GM12878 (cell line): ENCODE measurements at regions of chr4 and their contacts with region 1.

Region 1: DNA sequence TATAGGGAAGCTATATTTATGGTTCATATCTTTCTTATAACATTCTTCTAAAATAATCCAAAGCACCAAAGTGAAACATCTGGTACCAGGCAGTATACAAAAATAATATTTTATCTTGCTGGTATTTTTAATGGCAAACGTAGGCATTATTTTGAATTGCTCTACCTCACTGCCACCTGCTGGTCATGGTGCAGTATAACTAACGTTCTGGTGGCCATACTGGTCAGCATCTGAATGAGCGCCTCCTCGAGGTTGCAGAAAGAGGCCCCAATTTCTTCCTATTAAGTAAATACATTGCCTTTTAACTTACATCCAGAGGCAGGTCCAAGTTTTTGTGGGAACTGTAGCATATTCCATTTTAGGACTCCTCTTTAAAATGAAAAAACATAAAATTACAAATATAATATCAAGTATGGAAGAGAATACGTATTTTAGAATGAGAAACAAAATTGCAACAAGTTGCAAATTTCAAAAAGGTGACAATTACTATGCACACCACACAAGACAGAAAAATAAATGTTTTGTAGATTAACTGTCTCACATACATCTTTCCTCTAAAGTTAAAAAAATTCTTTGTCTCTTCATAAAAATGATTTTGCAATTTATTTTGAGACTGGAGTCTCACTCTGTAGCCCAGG is 22.9 kb upstream of the CWH43 start:
- DNase-seq: peak; percentile 21
- ATAC-seq: peak; percentile 97
- H3K4me3 ChIP-seq: no peak overlapping the region
- H3K27ac ChIP-seq: no peak overlapping the region
- H3K4me1 ChIP-seq: no peaks in the 10 kb centered on the region
- H3K27me3 ChIP-seq: no peaks in the 10 kb centered on the region; a peak in 1 of 4 replicates
- CTCF ChIP-seq: peak; percentile 89 to 100 (median 99); a peak in 5 of 6 replicates
- EP300 ChIP-seq: no peak
- POLR2A ChIP-seq: no peak
- RAD21 ChIP-seq: peak; percentile 97

Region 2: DNA sequence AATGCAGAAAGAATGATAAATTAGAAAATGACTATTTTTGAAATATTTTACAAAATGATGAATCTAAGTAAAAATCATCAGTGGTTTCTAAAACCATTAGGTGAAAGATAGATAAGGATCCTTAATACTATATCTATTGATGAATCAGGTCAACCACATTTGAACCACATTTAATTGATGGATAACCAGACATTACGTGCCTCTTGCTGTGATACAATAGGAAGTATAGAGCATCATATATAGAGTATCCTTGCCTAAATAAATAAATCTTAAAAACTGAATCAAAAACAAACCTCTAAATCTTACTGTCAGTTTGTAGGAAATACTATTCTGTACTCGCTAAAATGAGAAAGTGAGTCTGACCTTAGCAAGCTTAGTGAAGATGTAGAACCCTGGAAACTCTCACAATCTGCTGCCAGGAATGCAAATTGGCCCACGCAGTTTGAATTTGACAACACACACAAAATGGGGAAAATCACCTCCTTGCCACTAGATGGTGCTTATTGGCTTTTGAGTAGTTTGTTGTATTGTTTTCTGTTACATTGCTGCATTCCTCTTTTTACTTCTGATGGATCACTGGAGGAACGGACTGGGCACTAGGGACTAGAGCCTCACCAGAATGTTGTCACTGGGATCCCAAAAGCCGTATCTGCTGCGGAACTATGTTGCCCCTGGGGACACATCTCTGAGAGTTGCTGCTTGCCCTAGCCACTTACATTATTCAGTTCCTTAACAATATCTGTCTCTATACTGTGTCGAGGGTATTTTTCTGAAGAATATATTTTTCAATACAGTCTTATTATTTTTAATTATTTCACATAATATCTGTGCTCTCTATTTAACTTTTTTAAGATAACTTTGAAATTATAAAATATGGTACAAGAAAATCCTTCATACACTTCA is 647.2 kb before region 1 on chr4:
- CTCF ChIA-PET with region 1: interaction called, 4 read pairs
- POLR2A ChIA-PET with region 1: no interaction called
- RAD21 ChIA-PET with region 1: no interaction called
- SMC1A ChIA-PET with region 1: no interaction called
- in situ Hi-C with region 1: no loop called
- intact Hi-C with region 1: loop called (anchors 5 kb)
- DNase-seq: no peak
- ATAC-seq: peak; percentile 89
- H3K4me3 ChIP-seq: no peak overlapping the region
- H3K27ac ChIP-seq: no peak overlapping the region
- H3K4me1 ChIP-seq: no peaks in the 10 kb centered on the region
- H3K27me3 ChIP-seq: no peaks in the 10 kb centered on the region
- CTCF ChIP-seq: peak; percentile 66 to 79 (median 70); a peak in 5 of 6 replicates
- EP300 ChIP-seq: no peak
- POLR2A ChIP-seq: no peak
- RAD21 ChIP-seq: peak; percentile 72

Region 3: GRCh38 chr4:48445704-48446103 is 517.5 kb before region 1 on chr4:
- CTCF ChIA-PET with region 1: interaction called, 5 read pairs
- POLR2A ChIA-PET with region 1: no interaction called
- RAD21 ChIA-PET with region 1: interaction called, 4 read pairs
- SMC1A ChIA-PET with region 1: interaction called, 3 read pairs
- in situ Hi-C with region 1: no loop called
- intact Hi-C with region 1: loop called (anchors 2 kb)
- DNase-seq: no peak
- ATAC-seq: peak; percentile 49; the same call in 1 of the 3 replicates
- H3K4me3 ChIP-seq: no peak overlapping the region
- H3K27ac ChIP-seq: no peak overlapping the region
- H3K4me1 ChIP-seq: no peaks in the 10 kb centered on the region
- H3K27me3 ChIP-seq: no peaks in the 10 kb centered on the region
- CTCF ChIP-seq: peak in 1 of 3 experiments; percentile 31; a peak in 2 of 6 replicates
- EP300 ChIP-seq: no peak
- POLR2A ChIP-seq: no peak
- RAD21 ChIP-seq: peak; percentile 53

Region 4: DNA sequence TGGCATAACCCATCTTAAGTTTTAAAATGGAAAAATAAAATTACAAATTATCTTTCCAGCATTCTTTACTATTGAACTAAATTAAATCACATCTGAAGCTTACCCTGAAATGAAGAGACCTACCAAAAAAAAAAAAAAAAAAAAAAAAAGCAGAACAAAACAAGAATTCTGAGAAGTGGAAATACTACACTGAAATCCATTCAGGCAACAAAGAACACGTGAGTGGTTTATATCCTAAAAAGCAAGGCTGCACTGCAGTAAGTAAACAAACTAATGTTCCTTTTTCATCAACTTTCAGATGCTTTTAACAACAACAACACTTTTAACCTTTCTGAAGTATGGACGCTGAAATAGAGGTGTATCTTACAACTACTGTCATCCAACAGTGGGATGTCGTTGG is 190.6 kb before region 1 on chr4:
- CTCF ChIA-PET with region 1: no interaction called
- POLR2A ChIA-PET with region 1: no interaction called
- RAD21 ChIA-PET with region 1: no interaction called
- SMC1A ChIA-PET with region 1: no interaction called
- in situ Hi-C with region 1: no loop called
- intact Hi-C with region 1: no loop called
- DNase-seq: no peak
- ATAC-seq: no peak
- H3K4me3 ChIP-seq: no peak overlapping the region
- H3K27ac ChIP-seq: no peak overlapping the region
- H3K4me1 ChIP-seq: no peaks in the 10 kb centered on the region; the same call in 1 of the 2 replicates
- H3K27me3 ChIP-seq: no peaks in the 10 kb centered on the region
- CTCF ChIP-seq: no peak
- EP300 ChIP-seq: no peak
- POLR2A ChIP-seq: no peak
- RAD21 ChIP-seq: no peak

Region 5: GRCh38 chr4:48877827-48878533 is 85.2 kb before region 1 on chr4:
- CTCF ChIA-PET with region 1: no interaction called
- POLR2A ChIA-PET with region 1: no interaction called
- RAD21 ChIA-PET with region 1: no interaction called
- SMC1A ChIA-PET with region 1: no interaction called
- in situ Hi-C with region 1: no loop called
- intact Hi-C with region 1: loop called (anchors 5 kb)
- DNase-seq: no peak
- ATAC-seq: peak; percentile 51; the same call in 2 of the 3 replicates
- H3K4me3 ChIP-seq: no peak overlapping the region
- H3K27ac ChIP-seq: no peak overlapping the region
- H3K4me1 ChIP-seq: no peaks in the 10 kb centered on the region
- H3K27me3 ChIP-seq: no peaks in the 10 kb centered on the region
- CTCF ChIP-seq: 0 out of 6 replicates have a peak, but pooled peaks of 1 of the 3 experiments have one; percentile 11
- EP300 ChIP-seq: no peak
- POLR2A ChIP-seq: no peak
- RAD21 ChIP-seq: peak; percentile 35